ENCODE measurements at regions of chr17 and their contacts with region 1.

Region 1: GRCh38 chr17:42937712-42938596 is 26.3 kb downstream of the AARSD1 start:
- DNase-seq: peak; percentile 59
- ATAC-seq: peak; percentile 62; the same call in 1 of the 2 replicates
- H3K4me3 ChIP-seq: no peak overlapping the region
- H3K27ac ChIP-seq: no peak overlapping the region
- H3K4me1 ChIP-seq: no peaks in the 10 kb centered on the region
- H3K27me3 ChIP-seq: no peaks in the 10 kb centered on the region
- CTCF ChIP-seq: peak; percentile 71

Region 2: DNA sequence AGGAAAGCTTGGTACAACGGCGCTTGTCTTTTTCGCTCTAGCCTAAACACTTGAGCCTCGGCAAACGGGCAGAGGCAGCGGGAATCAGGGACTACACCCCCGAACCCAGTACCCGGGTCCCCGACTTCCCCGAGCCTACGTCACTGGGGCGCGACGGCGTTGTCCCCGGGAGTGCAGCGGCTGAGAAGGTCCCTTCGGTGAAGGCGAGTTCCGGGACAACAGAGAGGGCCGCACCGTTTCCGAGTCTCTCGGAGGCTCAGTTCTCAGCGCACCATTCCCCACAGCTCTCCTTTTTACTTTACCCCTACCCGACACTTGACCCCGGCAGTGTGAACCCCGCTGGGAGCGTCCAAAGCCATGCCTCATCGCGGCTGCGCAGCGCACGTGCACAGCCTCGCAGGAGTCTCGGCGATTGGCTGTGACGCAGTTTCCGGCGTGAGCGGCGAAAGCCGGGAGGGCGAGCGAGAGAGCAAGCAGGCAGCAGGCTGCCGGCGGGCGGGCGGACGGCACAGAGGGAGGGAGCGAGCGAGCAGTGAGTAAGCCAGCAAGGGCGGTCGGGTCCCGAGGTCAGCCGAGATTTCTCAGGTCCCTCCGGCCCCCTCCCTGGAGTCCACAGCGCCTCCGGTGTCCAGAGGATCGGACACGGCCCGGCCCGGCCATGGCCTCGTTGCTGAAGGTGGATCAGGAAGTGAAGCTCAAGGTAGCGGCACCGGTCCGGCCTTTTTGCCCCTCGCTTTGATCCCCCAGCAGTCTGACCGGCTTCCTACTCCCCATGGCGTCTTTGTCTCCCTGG is 104.8 kb before region 1 on chr17 and contains the start of gene PSME3:
- CTCF ChIA-PET with region 1: interaction called, 11 read pairs
- POLR2A ChIA-PET with region 1: no interaction called
- intact Hi-C with region 1: no loop called
- DNase-seq: peak; percentile 80
- ATAC-seq: peak; percentile 91
- H3K4me3 ChIP-seq: peak within 1 kb of the TSS; percentile 96
- H3K27ac ChIP-seq: peak within 1 kb of the TSS; percentile 75
- H3K4me1 ChIP-seq: peaks cover 12% of the 10 kb centered on the region
- H3K27me3 ChIP-seq: no peaks in the 10 kb centered on the region
- CTCF ChIP-seq: no peak
- total RNA-seq, gene PSME3: 107 and 123 TPM in 2 replicates

Measured in PC-3 (cell line).